ENCODE measurements at regions of chr22 and their contacts with region 1.

Region 1: GRCh38 chr22:31211862-31212730 is at the start of gene LIMK2:
- DNase-seq: peak; percentile 99

Region 2: DNA sequence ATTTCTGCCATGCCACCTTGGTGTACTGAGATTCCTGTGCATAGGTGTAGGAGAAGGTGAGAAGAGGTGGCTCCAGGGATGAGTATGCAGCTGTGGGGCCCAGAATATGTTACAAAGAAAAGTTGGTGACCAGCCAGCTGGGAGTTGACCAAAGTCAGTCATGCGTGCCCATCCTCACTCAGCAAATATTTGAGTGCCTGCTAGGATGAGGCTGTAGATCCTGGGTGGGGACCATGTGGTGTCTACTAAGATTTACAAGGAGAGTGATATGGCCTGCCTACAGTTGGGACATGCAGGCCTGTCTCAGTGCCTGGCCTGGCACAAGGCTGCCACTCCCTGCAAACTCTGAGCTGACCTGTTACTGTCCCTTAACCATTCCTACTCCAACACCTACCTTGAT is 32.7 kb before region 1 on chr22:
- CTCF ChIA-PET with region 1: no interaction called
- POLR2A ChIA-PET with region 1: no interaction called
- DNase-seq: no peak

Region 3: DNA sequence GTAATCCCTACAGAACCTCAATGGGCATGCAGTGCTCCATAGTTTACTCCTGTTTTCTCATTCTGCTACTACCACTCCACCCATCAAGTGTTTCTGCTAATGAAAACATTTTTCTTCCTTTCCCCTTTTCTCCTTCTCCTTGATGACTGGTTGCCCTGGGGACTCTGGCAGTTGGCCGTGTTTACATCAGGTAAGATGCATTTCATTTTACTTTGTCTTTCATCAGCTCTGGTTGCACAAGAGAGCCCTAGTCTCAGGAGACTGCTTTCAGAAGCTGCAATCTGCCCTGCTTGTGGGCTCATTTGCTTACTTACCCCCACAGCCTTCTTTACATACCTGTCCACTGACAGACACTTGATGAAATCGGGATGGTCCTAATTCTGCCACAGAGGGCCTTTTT is 19.6 kb before region 1 on chr22:
- CTCF ChIA-PET with region 1: no interaction called
- POLR2A ChIA-PET with region 1: no interaction called
- DNase-seq: no peak

Region 4: DNA sequence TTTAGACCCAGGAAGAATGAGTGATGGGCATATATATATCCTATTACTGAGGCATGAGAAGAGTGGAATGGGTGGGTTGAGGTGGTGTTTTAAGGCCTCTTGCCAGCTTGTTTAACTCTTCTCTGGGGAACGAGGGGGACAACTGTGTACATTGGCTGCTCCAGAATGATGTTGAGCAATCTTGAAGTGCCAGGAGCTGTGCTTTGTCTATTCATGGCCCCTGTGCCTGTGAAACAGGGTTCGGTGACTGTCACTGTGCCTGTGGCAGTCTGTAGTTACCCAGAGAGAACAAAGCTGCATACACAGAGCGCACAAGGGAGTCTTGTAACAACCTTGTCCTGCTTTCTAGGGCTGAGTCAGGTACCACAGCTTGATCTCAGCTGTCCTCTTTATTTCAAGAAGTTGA is 11.7 kb after region 1 on chr22:
- CTCF ChIA-PET with region 1: interaction called, 19 read pairs
- POLR2A ChIA-PET with region 1: interaction called, 7 read pairs
- DNase-seq: no peak

Region 5: GRCh38 chr22:31272522-31273446 is 60.7 kb after region 1 on chr22:
- CTCF ChIA-PET with region 1: interaction called, 19 read pairs
- POLR2A ChIA-PET with region 1: interaction called, 6 read pairs
- DNase-seq: peak; percentile 81

Region 6: GRCh38 chr22:31284281-31285155 is 72.4 kb after region 1 on chr22:
- CTCF ChIA-PET with region 1: no interaction called
- POLR2A ChIA-PET with region 1: no interaction called
- DNase-seq: no peak

Measured in HEK293T (cell line).